Stomach (tissue), 19 donors: ENCODE measurements at regions of chr22 and their contacts with region 1.

Region 1: GRCh38 chr22:39123751-39124601 is 26.9 kb downstream of the APOBEC3H start:
- DNase-seq: no peak
- H3K4me3 ChIP-seq: no peak overlapping the region
- H3K27ac ChIP-seq: no peak overlapping the region
- H3K4me1 ChIP-seq: peaks cover 0 to 10% (median 4%) of the 10 kb centered on the region in 4 donors
- H3K27me3 ChIP-seq: no peaks in the 10 kb centered on the region
- CTCF ChIP-seq: no peak
- EP300 ChIP-seq: no peak
- POLR2A ChIP-seq: no peak

Region 2: DNA sequence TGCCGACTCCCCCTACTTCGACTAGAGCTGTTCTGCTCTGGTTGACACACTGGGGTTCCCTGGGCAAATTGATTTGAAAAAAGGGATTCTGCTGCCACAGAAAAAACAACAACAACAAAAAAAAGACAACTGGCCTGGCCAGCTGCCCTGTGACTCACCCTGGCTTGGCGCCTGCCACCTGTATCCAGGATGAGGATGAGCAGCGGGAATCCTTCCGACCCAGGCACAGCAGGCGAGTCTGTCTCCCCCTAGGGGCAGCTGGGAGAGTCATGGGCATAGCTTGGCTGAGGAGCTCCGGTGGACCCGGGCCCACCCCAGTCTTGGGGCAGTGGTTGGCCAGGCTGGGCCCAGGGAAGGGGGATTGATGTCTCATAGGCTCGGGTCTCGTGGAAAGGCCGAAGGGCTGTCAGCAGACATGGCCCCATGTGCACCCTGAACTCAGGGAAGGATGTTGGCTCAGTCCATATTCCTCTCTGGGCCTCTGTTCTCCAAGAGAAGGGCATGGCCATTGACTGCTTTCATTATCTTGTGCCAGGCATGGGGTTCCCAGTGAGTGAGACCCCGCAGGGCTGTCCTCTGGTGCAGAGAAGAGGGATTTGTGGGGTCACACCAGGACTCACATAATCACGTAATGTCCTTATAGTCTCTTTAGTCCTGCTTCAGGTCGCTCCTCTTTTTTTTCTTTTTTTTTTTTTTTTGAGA is 357.7 kb before region 1 on chr22:
- intact Hi-C with region 1: loop called (anchors 5 kb)
- DNase-seq: peak; percentile 60 to 82
- H3K4me3 ChIP-seq: no peak overlapping the region
- H3K27ac ChIP-seq: no peak overlapping the region
- H3K4me1 ChIP-seq: peaks cover 0 to 13% (median 2%) of the 10 kb centered on the region in 4 donors
- H3K27me3 ChIP-seq: peaks cover 0 to 8% (median 0%) of the 10 kb centered on the region in 3 donors
- CTCF ChIP-seq: peak in 5 of 7 experiments; percentile 20 to 73 (median 58)
- EP300 ChIP-seq: no peak
- POLR2A ChIP-seq: no peak

Region 3: DNA sequence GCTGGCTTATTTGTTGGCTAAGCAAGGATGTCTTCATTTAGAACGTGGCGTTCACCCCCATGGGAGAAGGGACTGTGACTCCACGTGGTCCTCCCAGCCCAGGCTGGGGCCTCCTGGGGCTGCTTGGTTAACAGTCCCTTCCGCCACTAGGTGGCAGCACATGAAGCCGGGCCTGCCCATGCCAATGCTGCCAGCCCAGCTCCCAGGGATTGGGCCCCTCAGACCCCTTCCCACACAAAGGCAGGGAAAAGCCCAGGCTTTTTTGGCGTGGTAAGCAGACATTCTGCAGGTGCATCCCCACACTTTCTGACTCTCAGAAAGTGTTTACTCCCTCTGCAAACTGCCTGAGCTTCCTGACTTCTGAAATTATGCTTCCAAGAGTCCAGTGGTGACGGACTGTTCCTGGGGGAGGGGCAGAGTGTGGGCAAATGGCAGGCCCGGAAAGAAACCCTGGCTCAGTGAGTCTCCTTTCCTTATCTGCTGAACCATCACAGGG is 255.0 kb before region 1 on chr22:
- intact Hi-C with region 1: loop called (anchors 5 kb)
- DNase-seq: peak; percentile 86 to 90
- H3K4me3 ChIP-seq: no peak overlapping the region
- H3K27ac ChIP-seq: peak overlapping the region in 1 of 5 donors; percentile 35
- H3K4me1 ChIP-seq: peaks cover 61 to 89% (median 72%) of the 10 kb centered on the region in 4 donors
- H3K27me3 ChIP-seq: no peaks in the 10 kb centered on the region
- CTCF ChIP-seq: peak in 5 of 7 experiments; percentile 72 to 92 (median 79)
- EP300 ChIP-seq: no peak
- POLR2A ChIP-seq: no peak

Region 4: DNA sequence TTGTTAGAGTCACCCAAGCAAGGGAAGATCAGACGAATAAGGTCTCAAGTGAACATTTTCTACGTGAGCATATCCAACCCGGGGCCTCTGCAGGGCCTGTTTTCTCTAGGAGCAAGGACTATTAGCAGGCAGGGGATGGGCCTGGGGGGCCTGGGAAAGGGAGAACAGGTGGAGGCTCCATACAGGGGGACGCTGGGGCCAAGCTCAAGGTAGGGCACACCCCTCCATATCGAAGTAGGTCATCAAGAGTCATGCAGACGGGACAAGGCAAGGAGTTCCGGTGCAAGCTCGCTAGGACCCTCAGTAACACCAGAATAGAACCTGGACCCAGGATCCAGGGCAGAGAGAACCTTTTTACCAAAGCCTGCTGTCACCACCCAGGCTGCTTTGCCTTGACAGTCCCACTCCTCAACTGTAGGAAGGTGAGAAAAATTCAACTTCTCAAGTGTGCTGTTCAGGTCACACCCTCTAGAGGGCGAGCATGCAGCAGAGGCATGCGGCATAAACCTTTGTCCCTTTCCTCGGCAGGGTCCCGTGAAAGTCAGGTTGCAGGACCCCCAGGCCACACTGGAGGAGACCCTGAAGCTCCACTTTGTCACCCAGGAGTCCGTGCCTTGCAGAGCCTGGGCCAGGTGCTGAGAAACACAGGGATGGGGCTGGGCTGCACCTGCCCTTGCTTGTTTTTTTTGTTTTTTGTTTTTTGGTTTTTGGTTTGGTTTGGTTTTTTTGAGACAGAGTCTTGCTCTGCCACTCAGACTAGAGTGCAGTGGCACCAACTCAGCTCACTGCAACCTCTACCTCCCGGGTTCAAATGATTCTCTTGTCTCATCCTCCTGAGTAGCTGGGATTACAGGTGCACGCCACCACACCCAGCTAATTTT is 150.4 kb before region 1 on chr22:
- intact Hi-C with region 1: no loop called
- DNase-seq: peak; percentile 52 to 64
- H3K4me3 ChIP-seq: no peak overlapping the region
- H3K27ac ChIP-seq: no peak overlapping the region
- H3K4me1 ChIP-seq: peaks cover 0 to 9% (median 0%) of the 10 kb centered on the region in 4 donors
- H3K27me3 ChIP-seq: peaks cover 0 to 13% (median 0%) of the 10 kb centered on the region in 3 donors
- CTCF ChIP-seq: peak in 3 of 7 experiments; percentile 68 to 78 (median 71)
- EP300 ChIP-seq: no peak
- POLR2A ChIP-seq: no peak

Region 5: GRCh38 chr22:39013942-39014722 is 109.8 kb before region 1 on chr22 and contains the start of gene APOBEC3C:
- intact Hi-C with region 1: loop called (anchors 10 kb)
- DNase-seq: peak; percentile 78 to 91
- H3K4me3 ChIP-seq: peak within 1 kb of the TSS; percentile 45 to 60 (median 51)
- H3K27ac ChIP-seq: peak within 1 kb of the TSS; percentile 74 to 88 (median 84)
- H3K4me1 ChIP-seq: peaks cover 13 to 27% (median 19%) of the 10 kb centered on the region in 4 donors
- H3K27me3 ChIP-seq: no peaks in the 10 kb centered on the region
- CTCF ChIP-seq: peak in 1 of 7 experiments; percentile 12
- EP300 ChIP-seq: no peak
- POLR2A ChIP-seq: no peak
- total RNA-seq, gene APOBEC3C: 1.2 to 11.6 (median 2.0) TPM